ENCODE measurements at regions of chr17 and their contacts with region 1.

Region 1: GRCh38 chr17:27506348-27507231 is 50.3 kb downstream of the KSR1 start:
- DNase-seq: peak; percentile 70
- ATAC-seq: peak; percentile 82
- H3K4me3 ChIP-seq: peak overlapping the region; percentile 61; the same call in 1 of the 2 replicates
- H3K27ac ChIP-seq: peak overlapping the region; percentile 79
- H3K4me1 ChIP-seq: peaks cover 30% of the 10 kb centered on the region
- H3K27me3 ChIP-seq: no peaks in the 10 kb centered on the region
- CTCF ChIP-seq: no peak
- EP300 ChIP-seq: peak; percentile 67 to 69; a peak in 3 of 4 replicates
- POLR2A ChIP-seq: 0 out of 2 replicates have a peak, but pooled peaks have one; percentile 24
- RAD21 ChIP-seq: 0 out of 2 replicates have a peak, but pooled peaks have one; percentile 13

Region 2: DNA sequence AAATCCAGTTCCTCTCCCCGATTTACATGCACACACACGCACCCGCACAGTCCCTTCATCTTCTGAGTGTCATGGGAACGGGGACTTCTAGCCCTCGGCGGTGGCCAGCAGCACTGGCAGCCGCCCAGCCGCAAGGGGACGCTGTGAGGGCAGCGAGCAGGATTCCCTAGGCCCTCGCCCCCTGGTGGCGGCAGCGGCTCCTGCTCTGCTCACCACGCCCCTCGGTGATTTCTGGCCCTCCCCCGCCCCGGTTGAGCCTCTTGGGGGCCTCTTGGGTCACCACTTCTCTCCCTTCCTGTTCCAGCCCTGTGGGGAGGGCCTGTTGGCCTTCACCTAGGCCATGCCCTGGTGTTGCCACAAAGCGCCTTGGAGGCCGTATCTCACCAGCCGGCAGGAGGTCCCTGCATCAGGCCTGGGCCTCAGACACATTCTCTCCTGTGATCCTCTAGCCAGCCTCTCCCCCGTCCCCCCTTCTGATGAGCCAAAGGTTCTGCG is 125.5 kb before region 1 on chr17:
- CTCF ChIA-PET with region 1: no interaction called
- POLR2A ChIA-PET with region 1: interaction called, 11 read pairs
- RAD21 ChIA-PET with region 1: no interaction called
- SMC1A ChIA-PET with region 1: no interaction called
- in situ Hi-C with region 1: no loop called
- intact Hi-C with region 1: no loop called
- DNase-seq: peak; percentile 27
- ATAC-seq: peak; percentile 96
- H3K4me3 ChIP-seq: no peak overlapping the region
- H3K27ac ChIP-seq: no peak overlapping the region
- H3K4me1 ChIP-seq: peaks cover 14% of the 10 kb centered on the region
- H3K27me3 ChIP-seq: no peaks in the 10 kb centered on the region
- CTCF ChIP-seq: peak; percentile 100; a peak in 5 of 6 replicates
- EP300 ChIP-seq: no peak
- POLR2A ChIP-seq: no peak
- RAD21 ChIP-seq: peak; percentile 67

Region 3: GRCh38 chr17:27461192-27461859 is 45.3 kb before region 1 on chr17:
- CTCF ChIA-PET with region 1: interaction called, 13 read pairs
- POLR2A ChIA-PET with region 1: interaction called, 18 read pairs
- RAD21 ChIA-PET with region 1: interaction called, 37 read pairs
- SMC1A ChIA-PET with region 1: interaction called, 139 read pairs
- in situ Hi-C with region 1: no loop called
- intact Hi-C with region 1: loop called (anchors 5 kb)
- DNase-seq: no peak
- ATAC-seq: peak; percentile 30
- H3K4me3 ChIP-seq: peak overlapping the region; percentile 89; the same call in 1 of the 2 replicates
- H3K27ac ChIP-seq: peak overlapping the region; percentile 62; the same call in 1 of the 2 replicates
- H3K4me1 ChIP-seq: peaks cover 41% of the 10 kb centered on the region
- H3K27me3 ChIP-seq: no peaks in the 10 kb centered on the region
- CTCF ChIP-seq: no peak
- EP300 ChIP-seq: no peak; a peak in 1 of 4 replicates
- POLR2A ChIP-seq: no peak
- RAD21 ChIP-seq: no peak

Region 4: DNA sequence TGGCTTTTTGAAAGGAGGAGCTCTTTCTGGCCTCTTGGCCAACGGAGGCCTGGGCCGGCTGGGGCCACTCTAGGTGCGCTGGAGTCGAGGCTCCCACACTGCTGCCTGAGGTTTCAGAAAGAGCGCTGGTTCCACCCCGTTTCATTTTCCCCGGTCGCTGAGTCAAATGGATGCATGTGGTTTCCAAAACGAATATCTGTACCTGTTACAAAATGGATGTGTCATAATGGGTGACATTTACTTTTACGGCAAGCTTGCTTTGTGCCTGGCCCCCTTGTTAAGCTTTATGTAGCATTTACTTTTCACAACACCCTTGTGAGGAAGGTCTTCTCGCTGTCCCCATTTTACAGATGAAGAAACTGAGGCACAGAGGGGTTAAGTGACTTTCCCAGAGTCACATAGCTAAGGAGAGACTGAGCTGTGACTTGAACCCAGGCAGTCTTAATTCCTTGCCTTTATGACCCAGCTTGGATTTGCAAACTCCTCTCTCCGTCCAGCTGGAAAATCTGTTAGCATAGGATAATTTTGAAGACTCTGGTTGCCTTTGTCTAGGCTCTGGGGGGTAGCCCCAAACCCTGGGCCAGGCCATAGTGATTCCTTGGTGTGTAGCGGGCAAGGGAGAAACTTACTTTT is 39.7 kb before region 1 on chr17:
- CTCF ChIA-PET with region 1: interaction called, 13 read pairs
- POLR2A ChIA-PET with region 1: interaction called, 5 read pairs
- RAD21 ChIA-PET with region 1: interaction called, 37 read pairs
- SMC1A ChIA-PET with region 1: interaction called, 139 read pairs
- in situ Hi-C with region 1: no loop called
- intact Hi-C with region 1: loop called (anchors 1 kb)
- DNase-seq: peak; percentile 87
- ATAC-seq: peak; percentile 79
- H3K4me3 ChIP-seq: peak overlapping the region; percentile 54
- H3K27ac ChIP-seq: peak overlapping the region; percentile 92
- H3K4me1 ChIP-seq: peaks cover 67% of the 10 kb centered on the region
- H3K27me3 ChIP-seq: no peaks in the 10 kb centered on the region
- CTCF ChIP-seq: 0 out of 6 replicates have a peak, but pooled peaks of 1 of the 3 experiments have one; percentile 4
- EP300 ChIP-seq: peak; percentile 26 to 90; a peak in 3 of 4 replicates
- POLR2A ChIP-seq: peak; percentile 47; the same call in 1 of the 2 replicates
- RAD21 ChIP-seq: no peak; the same call in 1 of the 2 replicates

Region 5: GRCh38 chr17:27473748-27474609 is 32.6 kb before region 1 on chr17:
- CTCF ChIA-PET with region 1: interaction called, 6 read pairs
- POLR2A ChIA-PET with region 1: interaction called, 7 read pairs
- RAD21 ChIA-PET with region 1: interaction called, 35 read pairs
- SMC1A ChIA-PET with region 1: interaction called, 139 read pairs
- in situ Hi-C with region 1: no loop called
- intact Hi-C with region 1: loop called (anchors 1 kb)
- DNase-seq: peak; percentile 97
- ATAC-seq: peak; percentile 35
- H3K4me3 ChIP-seq: peak overlapping the region; percentile 42
- H3K27ac ChIP-seq: peak overlapping the region; percentile 98
- H3K4me1 ChIP-seq: peaks cover 85% of the 10 kb centered on the region
- H3K27me3 ChIP-seq: no peaks in the 10 kb centered on the region
- CTCF ChIP-seq: no peak
- EP300 ChIP-seq: peak; percentile 68 to 81; a peak in 2 of 4 replicates
- POLR2A ChIP-seq: no peak
- RAD21 ChIP-seq: peak; percentile 17; the same call in 1 of the 2 replicates

Region 6: DNA sequence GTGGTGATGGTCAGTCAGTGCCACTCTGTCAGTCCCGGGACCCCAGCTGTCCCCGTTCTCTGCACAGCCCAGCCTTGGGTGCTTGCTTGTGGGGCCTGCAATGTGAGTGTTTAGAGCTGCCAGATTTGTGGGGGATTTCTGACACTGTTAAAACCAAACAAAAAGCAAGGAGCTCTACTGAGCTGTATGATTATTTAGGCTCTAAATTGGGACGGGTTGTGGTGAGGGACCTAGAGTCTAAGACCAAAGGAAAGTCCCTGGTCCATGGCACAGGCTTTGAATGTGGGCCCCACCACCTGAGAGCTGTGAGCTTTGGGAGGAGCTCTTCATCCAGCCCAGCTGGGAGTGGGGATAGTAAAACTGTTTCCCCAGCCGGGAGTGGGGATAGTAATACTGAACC is 13.0 kb after region 1 on chr17:
- CTCF ChIA-PET with region 1: interaction called, 5 read pairs
- POLR2A ChIA-PET with region 1: interaction called, 31 read pairs
- RAD21 ChIA-PET with region 1: interaction called, 30 read pairs
- SMC1A ChIA-PET with region 1: interaction called, 52 read pairs
- in situ Hi-C with region 1: no loop called
- intact Hi-C with region 1: no loop called
- DNase-seq: peak; percentile 51
- ATAC-seq: peak; percentile 83
- H3K4me3 ChIP-seq: no peak overlapping the region
- H3K27ac ChIP-seq: peak overlapping the region; percentile 75
- H3K4me1 ChIP-seq: peaks cover 36% of the 10 kb centered on the region
- H3K27me3 ChIP-seq: no peaks in the 10 kb centered on the region
- CTCF ChIP-seq: no peak
- EP300 ChIP-seq: no peak
- POLR2A ChIP-seq: no peak
- RAD21 ChIP-seq: 0 out of 2 replicates have a peak, but pooled peaks have one; percentile 6

Region 7: DNA sequence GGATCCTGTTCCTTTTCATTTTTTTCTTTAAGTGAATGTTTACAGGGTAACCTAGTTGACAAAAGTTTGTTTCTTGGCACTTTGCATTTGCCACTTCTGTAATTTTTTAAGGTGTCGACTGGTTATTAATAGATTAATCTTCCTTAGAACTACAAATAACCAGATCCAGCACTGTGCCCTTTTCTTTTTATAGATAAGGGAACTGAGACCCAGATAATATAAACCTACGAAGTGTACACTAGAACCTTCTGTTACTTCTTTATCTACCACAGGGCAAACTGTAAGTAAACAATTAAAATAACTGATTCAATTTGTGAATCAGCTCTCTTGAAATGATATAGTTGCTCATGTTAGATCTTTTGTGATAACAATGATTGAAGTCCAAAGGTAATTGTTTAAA is 591.3 kb after region 1 on chr17:
- CTCF ChIA-PET with region 1: no interaction called
- POLR2A ChIA-PET with region 1: no interaction called
- RAD21 ChIA-PET with region 1: no interaction called
- SMC1A ChIA-PET with region 1: no interaction called
- in situ Hi-C with region 1: no loop called
- intact Hi-C with region 1: no loop called
- DNase-seq: peak; percentile 20
- ATAC-seq: peak; percentile 92
- H3K4me3 ChIP-seq: no peak overlapping the region
- H3K27ac ChIP-seq: peak overlapping the region; percentile 51; the same call in 1 of the 2 replicates
- H3K4me1 ChIP-seq: peaks cover 10% of the 10 kb centered on the region; the same call in 1 of the 2 replicates
- H3K27me3 ChIP-seq: no peaks in the 10 kb centered on the region
- CTCF ChIP-seq: no peak
- EP300 ChIP-seq: peak in 1 of 2 experiments; percentile 79; a peak in 2 of 4 replicates
- POLR2A ChIP-seq: no peak
- RAD21 ChIP-seq: no peak